Activated CD4-positive, alpha-beta T cell treated with anti-CD3 and anti-CD28 coated beads, Interleukin-2, amount 10 ng/mL, durations not matched to agents 7 days and 5 days (primary cell): ENCODE measurements at regions of chr14 and their contacts with region 1.

Region 1: DNA sequence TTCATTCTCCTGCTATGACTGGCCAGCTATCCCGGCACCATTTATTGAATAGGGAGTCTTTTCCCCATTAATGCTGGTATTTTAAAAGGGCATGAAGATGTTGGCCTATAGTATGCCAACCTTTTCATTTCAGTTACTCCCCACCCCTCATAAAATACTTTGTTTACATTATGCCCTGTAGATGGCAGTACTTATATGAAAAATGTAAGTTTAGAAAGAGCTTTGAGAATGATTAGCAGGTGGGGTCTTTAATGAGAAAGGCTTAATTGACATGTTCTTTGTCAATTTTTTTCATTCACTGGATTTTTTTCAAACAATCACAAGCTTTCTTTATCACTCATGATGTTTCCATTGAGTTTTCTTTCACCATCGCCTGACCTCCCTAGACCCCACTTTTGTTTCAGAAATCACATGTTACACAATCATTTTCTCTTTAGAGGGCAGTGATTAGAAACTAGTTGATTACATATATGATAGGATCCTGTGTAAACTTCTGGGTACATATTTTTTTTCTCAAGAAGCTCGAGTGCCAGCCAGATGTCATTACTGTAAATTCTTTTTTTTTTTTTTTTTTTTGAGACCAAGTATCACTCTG is 62.6 kb upstream of the PSMA6 start:
- DNase-seq: no peak
- H3K4me3 Mint-ChIP-seq: no peak overlapping the region
- H3K27ac Mint-ChIP-seq: no peak overlapping the region
- H3K4me1 Mint-ChIP-seq: peaks cover 21% of the 10 kb centered on the region
- H3K27me3 Mint-ChIP-seq: no peaks in the 10 kb centered on the region

Region 2: DNA sequence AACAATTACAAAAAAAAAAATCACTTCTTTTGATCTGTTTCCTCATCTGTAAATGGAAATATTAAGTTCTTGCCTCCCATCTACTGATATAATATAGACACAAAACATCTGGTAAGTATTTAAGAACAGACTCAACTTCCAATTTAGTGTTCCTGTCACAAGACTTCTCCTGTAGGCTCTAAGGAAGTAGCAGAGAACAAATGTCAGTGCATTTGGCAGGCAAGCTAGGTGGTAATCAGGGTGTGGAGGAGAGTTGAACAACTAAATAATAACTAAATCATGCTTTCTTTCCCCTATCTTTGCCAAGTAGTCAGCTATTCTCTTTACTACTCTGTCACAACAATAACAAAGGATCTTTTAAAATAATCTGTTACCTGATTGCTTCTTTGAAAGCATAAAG is 376.6 kb before region 1 on chr14:
- CTCF ChIA-PET with region 1: no interaction called
- POLR2A ChIA-PET with region 1: interaction called, 10 read pairs
- DNase-seq: no peak
- H3K4me3 Mint-ChIP-seq: no peak overlapping the region
- H3K27ac Mint-ChIP-seq: peak overlapping the region; percentile 57
- H3K4me1 Mint-ChIP-seq: peaks cover 27% of the 10 kb centered on the region
- H3K27me3 Mint-ChIP-seq: no peaks in the 10 kb centered on the region